ENCODE measurements at regions of chr17 and their contacts with region 1.

Region 1: GRCh38 chr17:60971515-60972369 is 294.1 kb downstream of the BCAS3 start:
- DNase-seq: peak; percentile 62
- ATAC-seq: peak; percentile 64
- H3K4me3 Mint-ChIP-seq: no peak overlapping the region
- H3K27ac Mint-ChIP-seq: no peak overlapping the region
- H3K4me1 Mint-ChIP-seq: no peaks in the 10 kb centered on the region
- H3K27me3 Mint-ChIP-seq: no peaks in the 10 kb centered on the region
- CTCF ChIP-seq: peak; percentile 67

Region 2: DNA sequence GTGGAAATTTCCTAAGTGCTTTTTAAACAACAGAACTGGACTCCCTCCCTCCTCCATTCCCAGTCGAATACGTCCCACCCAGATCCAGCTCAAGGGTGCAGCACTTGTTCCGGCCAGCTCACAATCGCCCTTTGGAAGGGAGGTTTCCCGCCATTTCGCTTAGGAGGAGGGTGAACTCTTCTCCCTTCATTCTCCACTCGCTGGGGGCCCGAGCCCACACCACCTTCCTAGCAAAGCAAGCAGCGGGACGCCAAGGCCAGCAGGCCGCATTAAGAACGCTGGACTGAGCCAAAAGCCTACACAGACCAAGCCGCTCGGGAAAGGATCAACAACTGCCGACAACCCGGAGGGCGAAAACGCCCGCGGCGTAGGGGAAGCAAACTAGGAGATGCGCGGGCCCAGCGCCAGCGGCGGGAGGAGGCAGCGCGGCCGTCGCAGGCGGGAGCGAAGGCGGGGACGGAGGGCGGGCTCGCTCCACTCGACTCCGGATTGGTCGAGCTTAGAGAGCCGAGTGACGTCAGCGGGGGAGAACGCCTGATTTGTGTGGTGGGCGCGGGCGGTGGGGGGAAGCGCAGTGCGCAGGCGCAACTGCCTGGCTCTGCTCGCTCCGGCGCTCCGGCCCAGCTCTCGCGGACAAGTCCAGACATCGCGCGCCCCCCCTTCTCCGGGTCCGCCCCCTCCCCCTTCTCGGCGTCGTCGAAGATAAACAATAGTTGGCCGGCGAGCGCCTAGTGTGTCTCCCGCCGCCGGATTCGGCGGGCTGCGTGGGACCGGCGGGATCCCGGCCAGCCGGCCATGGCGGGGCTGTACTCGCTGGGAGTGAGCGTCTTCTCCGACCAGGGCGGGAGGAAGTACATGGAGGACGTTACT is 371.9 kb before region 1 on chr17 and contains the start of gene PPM1D:
- CTCF ChIA-PET with region 1: no interaction called
- POLR2A ChIA-PET with region 1: no interaction called
- intact Hi-C with region 1: no loop called
- DNase-seq: peak; percentile 99
- ATAC-seq: peak; percentile 94
- H3K4me3 Mint-ChIP-seq: peak within 1 kb of the TSS; percentile 84
- H3K27ac Mint-ChIP-seq: peak within 1 kb of the TSS; percentile 95
- H3K4me1 Mint-ChIP-seq: peaks cover 32% of the 10 kb centered on the region
- H3K27me3 Mint-ChIP-seq: peaks cover 1% of the 10 kb centered on the region
- CTCF ChIP-seq: no peak
- total RNA-seq, gene PPM1D: 11.6 to 12.3 TPM

Region 3: GRCh38 chr17:61360194-61360943 is 388.6 kb after region 1 on chr17:
- CTCF ChIA-PET with region 1: interaction called, 12 read pairs
- POLR2A ChIA-PET with region 1: no interaction called
- intact Hi-C with region 1: no loop called
- DNase-seq: no peak
- ATAC-seq: no peak
- H3K4me3 Mint-ChIP-seq: no peak overlapping the region
- H3K27ac Mint-ChIP-seq: no peak overlapping the region
- H3K4me1 Mint-ChIP-seq: no peaks in the 10 kb centered on the region
- H3K27me3 Mint-ChIP-seq: no peaks in the 10 kb centered on the region
- CTCF ChIP-seq: no peak

Measured in activated CD8-positive, alpha-beta T cell treated with anti-CD3 and anti-CD28 coated beads for 36 hours (primary cell).